ENCODE measurements at regions of chr10 and their contacts with region 1.

Region 1: GRCh38 chr10:59906417-59907202 is at the start of gene CCDC6:
- DNase-seq: peak; percentile 92
- H3K4me3 Mint-ChIP-seq: peak within 1 kb of the TSS; percentile 87
- H3K27ac Mint-ChIP-seq: peak within 1 kb of the TSS; percentile 86
- H3K4me1 Mint-ChIP-seq: peaks cover 47% of the 10 kb centered on the region
- H3K27me3 Mint-ChIP-seq: no peaks in the 10 kb centered on the region
- CTCF ChIP-seq: peak; percentile 50
- total RNA-seq, gene CCDC6: 56.6 and 66.4 TPM in 2 replicates

Region 2: DNA sequence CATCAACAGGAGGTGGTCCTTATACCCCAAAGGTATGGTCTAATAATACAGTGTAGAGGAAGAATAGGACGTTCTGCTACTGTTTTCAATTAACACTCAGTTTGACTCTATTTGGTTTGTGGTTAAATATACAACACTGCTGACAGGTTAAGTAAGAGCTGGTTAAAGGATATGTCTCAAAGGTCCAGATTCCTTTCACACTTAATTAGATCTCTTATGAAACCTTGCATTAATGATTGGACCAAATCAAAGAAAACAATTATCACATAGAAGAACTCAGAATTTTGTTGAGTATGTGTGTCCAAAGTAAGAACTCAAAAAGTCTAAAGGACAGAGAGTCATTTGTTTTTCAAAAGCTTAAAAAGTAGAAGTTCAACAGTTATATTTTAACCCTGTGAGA is 171.3 kb before region 1 on chr10:
- CTCF ChIA-PET with region 1: no interaction called
- POLR2A ChIA-PET with region 1: no interaction called
- intact Hi-C with region 1: no loop called
- DNase-seq: no peak
- H3K4me3 Mint-ChIP-seq: no peak overlapping the region
- H3K27ac Mint-ChIP-seq: no peak overlapping the region
- H3K4me1 Mint-ChIP-seq: no peaks in the 10 kb centered on the region
- H3K27me3 Mint-ChIP-seq: peaks cover 10% of the 10 kb centered on the region
- CTCF ChIP-seq: no peak

Region 3: GRCh38 chr10:59847326-59847725 is 59.3 kb before region 1 on chr10:
- CTCF ChIA-PET with region 1: interaction called, 11 read pairs
- POLR2A ChIA-PET with region 1: interaction called, 3 read pairs
- intact Hi-C with region 1: no loop called
- DNase-seq: no peak
- H3K4me3 Mint-ChIP-seq: no peak overlapping the region
- H3K27ac Mint-ChIP-seq: no peak overlapping the region
- H3K4me1 Mint-ChIP-seq: no peaks in the 10 kb centered on the region
- H3K27me3 Mint-ChIP-seq: no peaks in the 10 kb centered on the region
- CTCF ChIP-seq: no peak

Region 4: DNA sequence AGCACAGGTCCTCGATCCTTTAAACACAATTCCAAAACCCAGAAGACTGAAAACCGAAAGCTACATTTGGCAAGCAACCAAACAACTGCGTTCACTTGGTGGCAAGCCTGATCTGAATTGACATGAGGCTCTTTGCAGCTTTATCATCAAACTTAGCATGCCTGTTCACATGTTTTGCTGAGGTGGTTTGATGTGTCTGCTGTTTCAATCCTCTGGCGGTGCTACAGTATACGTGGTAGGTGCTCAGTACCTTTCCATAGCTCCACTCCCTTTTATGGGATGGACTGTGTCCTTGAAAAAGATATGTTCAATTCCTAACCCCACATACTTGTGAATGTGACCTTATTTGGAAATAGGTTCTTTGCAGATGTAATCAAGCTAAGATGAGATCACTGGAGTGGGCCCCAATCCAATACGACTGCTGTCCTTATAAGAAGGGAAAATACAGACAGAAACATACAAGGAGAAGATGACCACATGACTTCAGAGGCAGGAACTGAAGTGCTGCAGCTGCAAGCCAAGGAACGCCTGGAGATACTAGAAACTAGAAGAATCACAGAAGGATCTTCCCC is 33.6 kb before region 1 on chr10:
- CTCF ChIA-PET with region 1: interaction called, 28 read pairs
- POLR2A ChIA-PET with region 1: interaction called, 83 read pairs
- intact Hi-C with region 1: loop called (anchors 2 kb)
- DNase-seq: peak; percentile 51
- H3K4me3 Mint-ChIP-seq: peak overlapping the region; percentile 39
- H3K27ac Mint-ChIP-seq: peak overlapping the region; percentile 81
- H3K4me1 Mint-ChIP-seq: peaks cover 48% of the 10 kb centered on the region
- H3K27me3 Mint-ChIP-seq: no peaks in the 10 kb centered on the region
- CTCF ChIP-seq: no peak

Region 5: DNA sequence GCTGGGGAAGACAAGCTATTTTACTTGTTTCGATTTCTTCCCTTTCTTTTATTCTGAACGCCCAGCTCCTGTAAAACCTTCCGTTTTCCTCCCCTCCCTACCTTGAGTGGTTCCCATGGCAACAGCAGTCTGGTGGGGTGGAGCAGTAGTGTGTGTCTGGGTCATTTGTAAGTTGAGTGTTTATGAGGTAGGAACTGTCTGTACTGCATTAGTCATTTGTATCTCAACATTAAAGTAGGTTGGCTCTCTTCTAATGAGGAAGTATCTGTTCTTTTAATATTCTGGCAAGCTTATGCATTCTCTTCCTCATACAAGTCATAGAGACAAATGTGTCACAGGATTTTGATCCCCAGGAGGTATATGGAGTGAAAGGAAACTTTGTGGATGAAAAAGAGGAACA is 85.1 kb after region 1 on chr10:
- CTCF ChIA-PET with region 1: interaction called, 11 read pairs
- POLR2A ChIA-PET with region 1: interaction called, 30 read pairs
- intact Hi-C with region 1: no loop called
- DNase-seq: peak; percentile 57
- H3K4me3 Mint-ChIP-seq: peak overlapping the region; percentile 59
- H3K27ac Mint-ChIP-seq: peak overlapping the region; percentile 94
- H3K4me1 Mint-ChIP-seq: peaks cover 16% of the 10 kb centered on the region
- H3K27me3 Mint-ChIP-seq: no peaks in the 10 kb centered on the region
- CTCF ChIP-seq: no peak

Region 6: GRCh38 chr10:60048091-60048501 is 141.5 kb after region 1 on chr10:
- CTCF ChIA-PET with region 1: interaction called, 3 read pairs
- POLR2A ChIA-PET with region 1: interaction called, 3 read pairs
- intact Hi-C with region 1: loop called (anchors 5 kb)
- DNase-seq: peak; percentile 44
- H3K4me3 Mint-ChIP-seq: no peak overlapping the region
- H3K27ac Mint-ChIP-seq: no peak overlapping the region
- H3K4me1 Mint-ChIP-seq: no peaks in the 10 kb centered on the region
- H3K27me3 Mint-ChIP-seq: no peaks in the 10 kb centered on the region
- CTCF ChIP-seq: peak; percentile 18

Measured in MCF 10A (cell line).